AG04449 (cell line): ENCODE measurements at regions of chrX and their contacts with region 1.

Region 1: DNA sequence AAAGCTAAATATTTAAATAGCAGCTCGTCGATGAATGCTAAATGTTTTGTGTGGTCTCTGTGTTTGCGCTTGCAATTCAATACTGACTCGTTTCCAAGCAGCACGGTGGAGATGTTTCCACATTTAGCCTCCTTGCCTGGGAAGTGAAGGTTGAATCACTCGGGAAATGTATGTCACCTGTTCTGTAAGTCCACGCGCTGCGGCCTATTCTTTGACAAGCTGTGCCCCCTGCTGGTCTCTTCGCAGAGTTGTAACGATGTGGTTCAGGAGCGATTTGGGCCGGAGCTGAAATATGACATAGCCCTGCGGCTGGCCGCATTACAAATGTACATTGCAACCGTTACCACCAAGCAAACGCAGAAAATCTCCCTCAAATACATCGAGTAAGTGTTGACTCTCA is 89.6 kb upstream of the PRPS2 start:
- DNase-seq: no peak
- H3K4me3 ChIP-seq: no peak overlapping the region
- CTCF ChIP-seq: peak; percentile 51

Region 2: DNA sequence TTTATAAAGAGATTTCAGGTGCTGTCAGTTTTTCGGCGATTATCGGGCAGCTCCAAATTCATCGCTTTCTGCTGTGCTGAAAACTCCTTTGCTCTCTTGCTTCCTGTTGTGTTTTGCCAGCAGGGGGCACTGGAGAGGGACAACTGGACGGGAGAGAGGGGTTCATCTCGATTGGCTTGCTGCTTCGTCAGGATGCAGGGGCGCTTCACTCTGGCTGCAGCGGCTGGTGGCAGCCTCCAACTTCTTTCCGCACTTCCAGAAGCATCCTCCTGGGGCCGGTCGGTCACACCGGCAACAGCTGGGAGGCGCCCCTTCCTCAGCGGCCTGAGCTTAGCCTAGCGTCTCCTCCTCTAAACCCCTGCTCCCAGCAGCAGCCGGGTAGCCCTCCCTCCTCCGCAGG is 914.1 kb before region 1 on chrX:
- CTCF ChIA-PET with region 1: interaction called, 16 read pairs
- POLR2A ChIA-PET with region 1: no interaction called
- DNase-seq: no peak
- H3K4me3 ChIP-seq: no peak overlapping the region
- CTCF ChIP-seq: peak; percentile 61

Region 3: GRCh38 chrX:12610079-12610478 is 91.5 kb before region 1 on chrX:
- CTCF ChIA-PET with region 1: no interaction called
- POLR2A ChIA-PET with region 1: no interaction called
- DNase-seq: peak; percentile 9
- H3K4me3 ChIP-seq: no peak overlapping the region
- CTCF ChIP-seq: no peak